ENCODE measurements at regions of chr1 and their contacts with region 1.

Region 1: DNA sequence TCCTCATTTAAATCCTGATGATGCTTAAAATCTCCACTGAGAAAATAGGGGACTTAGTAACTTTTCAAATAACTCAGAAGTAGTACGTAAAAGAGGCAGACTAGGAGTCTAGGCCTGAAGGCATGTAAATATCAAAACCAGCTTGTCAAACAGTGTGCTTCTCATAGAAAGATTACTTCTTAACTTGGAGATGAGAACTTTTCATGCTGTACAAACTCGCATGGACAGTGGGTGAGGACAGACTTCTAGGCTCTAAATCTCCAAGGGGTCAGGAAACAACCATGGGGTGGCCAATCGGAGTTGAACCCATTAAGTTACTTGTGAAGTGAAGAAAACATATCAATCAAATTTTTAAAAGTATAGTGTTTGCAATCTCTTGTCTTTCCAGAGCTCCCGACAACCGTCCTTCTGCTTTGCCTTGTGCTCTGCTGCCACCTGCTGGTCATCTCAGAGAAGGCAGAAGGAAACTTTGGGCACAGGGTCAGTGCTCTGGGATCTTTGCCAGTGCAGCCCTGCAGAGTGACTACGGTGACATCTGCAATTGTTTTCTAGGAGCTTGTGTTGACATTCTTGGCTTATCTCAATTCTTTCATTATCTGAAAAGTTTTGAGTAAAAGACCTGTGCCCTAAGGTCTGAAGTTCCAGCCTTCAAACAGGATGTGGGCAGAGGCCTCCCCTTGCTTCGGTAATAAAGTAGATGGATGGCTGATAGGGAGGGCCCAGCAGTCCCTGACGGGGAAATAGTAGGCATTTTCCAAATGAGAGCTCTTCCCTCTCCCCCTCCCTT is 105.1 kb upstream of the PDE4B start:
- DNase-seq: peak; percentile 63 to 85
- ATAC-seq: peak; percentile 73 to 93 (median 84)
- H3K4me3 ChIP-seq: no peak overlapping the region
- H3K4me3 Mint-ChIP-seq: no peak overlapping the region
- H3K27ac ChIP-seq: no peak overlapping the region
- H3K27ac Mint-ChIP-seq: no peak overlapping the region
- H3K4me1 ChIP-seq: peaks cover 4% of the 10 kb centered on the region
- H3K4me1 Mint-ChIP-seq: no peaks in the 10 kb centered on the region
- H3K27me3 ChIP-seq: no peaks in the 10 kb centered on the region
- H3K27me3 Mint-ChIP-seq: peaks cover 11 to 12% of the 10 kb centered on the region in 2 donors
- CTCF ChIP-seq: peak; percentile 86

Region 2: DNA sequence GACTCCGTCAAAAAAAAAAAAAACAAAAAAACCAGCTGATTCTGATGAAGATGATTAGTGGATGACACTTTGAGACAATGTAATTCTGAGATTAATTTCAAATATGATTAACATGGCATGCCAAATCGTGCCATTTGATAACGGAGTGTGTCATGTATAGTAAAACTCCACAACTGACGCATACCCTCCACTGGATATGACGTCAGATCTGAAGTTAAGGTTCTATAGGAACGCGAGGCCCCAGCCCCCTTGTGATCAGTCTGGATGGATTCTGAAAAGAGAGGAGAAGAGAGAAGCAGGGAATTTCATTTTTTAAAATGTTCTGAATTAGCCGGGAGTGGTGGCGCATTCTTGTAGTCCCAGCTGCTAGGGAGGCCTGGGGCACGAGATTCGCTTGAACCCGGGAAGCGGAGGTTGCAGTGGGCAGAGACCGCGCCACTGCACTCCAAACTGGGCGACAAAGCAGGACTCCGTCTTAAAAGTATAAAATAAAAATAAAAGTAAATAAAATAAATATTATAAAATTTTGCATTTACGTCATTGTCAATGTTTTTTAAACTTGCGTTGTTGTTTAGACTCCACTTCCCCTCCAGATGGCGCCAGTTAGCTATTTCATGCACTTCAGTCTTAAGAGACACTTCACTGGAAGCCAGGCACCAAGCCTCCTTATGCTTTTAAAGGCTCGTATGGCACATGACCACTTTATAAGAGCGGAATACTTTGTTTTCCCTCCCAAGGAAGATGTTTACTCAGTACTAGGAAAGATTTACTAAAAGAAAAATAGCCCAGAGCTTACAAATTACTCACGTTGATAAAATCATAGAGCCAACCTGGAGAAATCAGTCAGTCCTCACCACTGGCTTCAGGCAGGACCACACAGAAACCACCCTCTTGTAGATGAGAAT is 1418.7 kb before region 1 on chr1:
- intact Hi-C with region 1: loop called (anchors 5 kb)
- DNase-seq: peak in 1 of 2 donors; percentile 83
- ATAC-seq: peak in 1 of 3 donors; percentile 56
- H3K4me3 ChIP-seq: no peak overlapping the region
- H3K4me3 Mint-ChIP-seq: no peak overlapping the region
- H3K27ac ChIP-seq: no peak overlapping the region
- H3K27ac Mint-ChIP-seq: no peak overlapping the region
- H3K4me1 ChIP-seq: no peaks in the 10 kb centered on the region
- H3K4me1 Mint-ChIP-seq: no peaks in the 10 kb centered on the region
- H3K27me3 ChIP-seq: no peaks in the 10 kb centered on the region
- H3K27me3 Mint-ChIP-seq: peaks cover 17 to 20% of the 10 kb centered on the region in 2 donors
- CTCF ChIP-seq: peak; percentile 38

Region 3: DNA sequence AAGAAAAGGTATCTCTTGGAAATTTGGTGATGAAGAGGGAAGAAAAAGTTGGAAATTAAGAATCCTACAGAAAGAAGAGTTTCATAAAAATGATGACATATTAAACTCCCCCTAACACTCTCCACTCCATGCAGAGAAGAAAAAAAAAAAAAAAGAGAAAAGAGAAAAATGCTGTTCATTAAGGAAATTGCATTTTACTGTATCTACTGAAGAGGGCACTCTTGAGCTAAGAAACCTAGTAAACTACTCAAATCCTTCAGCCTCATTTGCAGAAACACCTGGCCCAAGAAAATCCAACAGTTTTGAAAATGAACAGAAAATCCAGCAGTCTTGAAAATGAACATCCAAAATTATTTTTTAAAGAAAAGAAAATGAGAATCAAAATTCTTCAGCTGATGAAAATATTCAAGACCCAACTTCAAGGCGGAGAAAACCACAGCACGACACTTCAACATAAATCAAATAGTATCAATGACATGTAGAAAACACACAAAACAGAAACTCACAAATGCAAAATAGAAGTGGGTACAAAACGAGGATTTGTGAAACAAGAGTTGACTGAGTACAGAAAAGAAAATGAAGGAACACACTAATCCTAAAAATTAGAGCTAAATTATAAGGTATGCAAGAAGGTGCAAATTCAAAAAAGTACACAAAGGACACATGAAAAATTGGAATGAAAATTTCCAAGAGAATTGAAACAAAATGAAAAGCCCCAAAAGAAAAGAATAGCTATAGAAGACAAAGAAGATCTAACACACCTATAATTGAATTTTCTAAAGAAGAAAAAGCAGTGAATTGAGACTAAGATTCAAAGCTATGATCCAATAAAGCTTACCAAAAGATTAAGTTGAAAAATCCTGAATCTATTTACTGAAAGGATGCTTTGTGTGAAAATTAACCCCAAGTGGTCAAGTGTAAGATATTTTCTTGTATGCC is 451.5 kb before region 1 on chr1:
- intact Hi-C with region 1: loop called (anchors 2 kb)
- DNase-seq: peak in 1 of 2 donors; percentile 55
- ATAC-seq: no peak
- H3K4me3 ChIP-seq: no peak overlapping the region
- H3K4me3 Mint-ChIP-seq: no peak overlapping the region
- H3K27ac ChIP-seq: no peak overlapping the region
- H3K27ac Mint-ChIP-seq: no peak overlapping the region
- H3K4me1 ChIP-seq: no peaks in the 10 kb centered on the region
- H3K4me1 Mint-ChIP-seq: no peaks in the 10 kb centered on the region
- H3K27me3 ChIP-seq: peaks cover 2% of the 10 kb centered on the region
- H3K27me3 Mint-ChIP-seq: peaks cover 10 to 36% of the 10 kb centered on the region in 2 donors
- CTCF ChIP-seq: peak; percentile 13

Region 4: DNA sequence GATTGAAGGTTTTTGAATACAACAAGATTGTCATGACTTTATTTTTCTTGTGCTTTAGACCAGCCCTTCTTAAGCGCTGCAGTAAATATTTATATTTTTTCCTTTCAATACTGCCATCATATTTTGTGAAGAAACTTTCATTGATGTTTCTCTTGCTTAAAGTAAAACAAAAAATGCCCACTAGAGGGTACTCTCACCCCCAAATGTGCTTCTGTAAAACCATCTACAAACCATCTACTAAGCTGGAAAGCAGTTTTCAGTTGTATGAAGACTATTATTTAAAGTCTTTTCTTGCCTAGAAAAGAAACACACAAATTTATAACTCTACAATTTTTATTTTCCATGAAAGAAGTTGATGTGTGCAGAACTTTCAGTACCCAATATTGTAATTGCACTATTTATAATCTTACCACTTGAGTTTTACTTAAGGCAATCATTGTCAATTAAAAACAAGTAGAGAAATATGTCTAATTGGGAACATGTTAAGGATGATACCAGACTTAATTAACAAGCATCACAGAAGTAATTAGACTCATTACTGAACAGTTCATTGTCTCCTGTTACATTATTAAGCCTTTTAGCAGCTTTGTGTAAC is 256.4 kb before region 1 on chr1:
- intact Hi-C with region 1: loop called (anchors 1 kb)
- DNase-seq: peak in 1 of 2 donors; percentile 55
- ATAC-seq: no peak
- H3K4me3 ChIP-seq: no peak overlapping the region
- H3K4me3 Mint-ChIP-seq: no peak overlapping the region
- H3K27ac ChIP-seq: no peak overlapping the region
- H3K27ac Mint-ChIP-seq: no peak overlapping the region
- H3K4me1 ChIP-seq: no peaks in the 10 kb centered on the region
- H3K4me1 Mint-ChIP-seq: peaks cover 0 to 5% of the 10 kb centered on the region in 2 donors
- H3K27me3 ChIP-seq: no peaks in the 10 kb centered on the region
- H3K27me3 Mint-ChIP-seq: no peaks in the 10 kb centered on the region
- CTCF ChIP-seq: peak; percentile 67

Measured in natural killer cell (primary cell).